Activated T-helper 1 cell treated with anti-CD3 and anti-CD28 coated beads, Interleukin-12 subunit alpha, Interleukin-12 subunit beta, Interleukin-2, Interleukin-4 antibody, amounts not matched to agents 30 ng/mL and 10 ng/mL and 1 ng/mL, durations not matched to agents 14 hours and 24 hours and 36 hours (primary cell): ENCODE measurements at regions of chr4 and their contacts with region 1.

Region 1: GRCh38 chr4:74189331-74190043 is 31.6 kb downstream of the MTHFD2L start:
- DNase-seq: no peak
- H3K4me3 Mint-ChIP-seq: no peak overlapping the region
- H3K27ac Mint-ChIP-seq: no peak overlapping the region
- H3K4me1 Mint-ChIP-seq: no peaks in the 10 kb centered on the region
- H3K27me3 Mint-ChIP-seq: peaks cover 2% of the 10 kb centered on the region

Region 2: GRCh38 chr4:74016068-74016467 is 173.4 kb before region 1 on chr4:
- intact Hi-C with region 1: no loop called
- DNase-seq: no peak
- H3K4me3 Mint-ChIP-seq: no peak overlapping the region
- H3K27ac Mint-ChIP-seq: peak overlapping the region; percentile 19
- H3K4me1 Mint-ChIP-seq: peaks cover 20% of the 10 kb centered on the region
- H3K27me3 Mint-ChIP-seq: peaks cover 2% of the 10 kb centered on the region

Region 3: DNA sequence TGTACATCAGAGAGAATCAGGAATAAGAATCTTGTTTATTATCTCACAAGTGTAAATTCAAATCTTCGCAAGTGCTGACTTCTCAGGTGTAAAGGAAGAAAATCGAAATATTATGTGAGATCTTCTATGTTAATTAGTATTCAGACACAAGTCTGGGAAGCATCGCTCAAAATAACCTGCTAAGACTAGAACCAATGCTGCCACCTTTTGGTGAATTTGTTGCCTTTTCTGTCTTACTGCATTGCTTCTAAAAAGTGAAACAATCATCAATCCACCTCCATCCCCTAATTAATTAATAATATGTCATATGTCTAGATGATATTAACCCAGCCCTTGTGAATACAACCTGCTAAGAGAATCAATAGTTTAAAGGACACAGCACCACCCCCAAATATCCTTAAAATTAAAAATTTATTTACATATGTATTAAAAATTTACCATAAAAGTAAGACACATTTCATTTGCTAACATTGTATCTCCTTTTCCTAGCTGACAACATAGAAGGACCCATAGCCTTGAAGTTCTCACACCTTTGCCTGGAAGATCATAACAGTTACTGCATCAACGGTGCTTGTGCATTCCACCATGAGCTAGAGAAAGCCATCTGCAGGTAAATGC is 122.3 kb after region 1 on chr4:
- intact Hi-C with region 1: loop called (anchors 1 kb)
- DNase-seq: no peak
- H3K4me3 Mint-ChIP-seq: no peak overlapping the region
- H3K27ac Mint-ChIP-seq: no peak overlapping the region
- H3K4me1 Mint-ChIP-seq: peaks cover 6% of the 10 kb centered on the region
- H3K27me3 Mint-ChIP-seq: peaks cover 5% of the 10 kb centered on the region

Region 4: DNA sequence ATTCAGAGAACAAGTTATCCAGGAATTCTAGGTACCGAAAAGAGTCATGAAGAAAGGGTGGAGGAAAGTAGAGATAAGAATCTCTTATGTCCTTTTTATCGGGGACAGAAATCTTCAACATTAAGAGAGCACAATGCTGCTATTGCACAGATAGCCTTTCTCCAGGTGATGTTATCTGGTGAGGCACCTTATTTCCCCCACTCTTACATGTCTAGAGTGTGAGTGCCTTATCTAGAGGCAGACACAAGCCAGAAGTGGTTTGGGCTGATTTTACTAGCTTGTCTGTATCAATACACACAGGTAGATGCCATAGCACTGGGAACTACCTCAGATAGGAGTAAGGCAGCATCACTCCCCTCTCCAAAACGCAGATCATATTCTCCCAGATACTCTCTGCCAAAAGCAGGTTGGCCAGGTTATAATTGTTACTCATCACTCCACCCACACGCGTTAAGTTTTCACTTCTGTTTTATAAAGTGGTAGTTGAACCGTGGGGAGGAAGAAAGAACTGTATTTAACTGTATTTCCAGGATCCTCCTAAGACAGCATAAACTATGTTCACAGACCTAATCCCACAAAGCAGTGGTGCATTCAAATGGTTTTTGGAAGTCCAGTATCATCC is 293.9 kb after region 1 on chr4:
- intact Hi-C with region 1: no loop called
- DNase-seq: no peak
- H3K4me3 Mint-ChIP-seq: no peak overlapping the region
- H3K27ac Mint-ChIP-seq: no peak overlapping the region
- H3K4me1 Mint-ChIP-seq: no peaks in the 10 kb centered on the region
- H3K27me3 Mint-ChIP-seq: peaks cover under 1% of the 10 kb centered on the region